CD8-positive, alpha-beta T cell (primary cell): ENCODE measurements at regions of chr5 and their contacts with region 1.

Region 1: DNA sequence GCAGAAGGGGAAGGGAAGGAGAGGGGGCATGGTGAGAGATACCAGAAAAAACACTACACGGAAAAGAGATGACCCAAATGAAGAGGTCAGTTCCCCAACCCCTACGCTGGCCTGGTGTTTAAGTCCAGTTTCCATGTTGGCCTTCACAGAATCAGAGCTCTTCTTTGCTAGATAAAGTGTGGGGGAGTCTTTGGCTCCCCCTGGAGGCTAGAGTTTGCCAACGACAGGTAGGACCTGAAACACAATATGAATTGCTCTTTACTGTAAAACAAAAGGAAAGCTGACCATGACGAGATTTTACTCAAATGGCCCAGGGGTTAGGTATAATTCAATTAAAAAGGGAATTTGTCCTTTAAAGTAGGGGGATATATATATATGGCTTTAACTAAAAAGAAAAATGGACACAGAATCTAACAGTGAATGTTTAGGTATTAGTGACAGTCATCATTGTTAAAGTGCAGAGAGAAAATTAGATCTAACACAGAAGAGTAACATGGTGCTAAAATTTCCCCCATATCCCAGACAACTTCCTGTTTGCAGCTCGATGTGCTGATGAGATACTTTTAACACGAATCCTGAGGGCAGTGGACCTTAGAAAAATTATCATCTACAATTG is 92.0 kb downstream of the SV2C start:
- DNase-seq: peak; percentile 23 to 73 (median 51)
- ATAC-seq: peak; percentile 49
- H3K4me3 ChIP-seq: no peak overlapping the region
- H3K4me3 Mint-ChIP-seq: peak overlapping the region; percentile 22
- H3K27ac ChIP-seq: peak overlapping the region in 1 of 2 experiments; percentile 69
- H3K27ac Mint-ChIP-seq: no peak overlapping the region
- H3K4me1 ChIP-seq: peaks cover 11% of the 10 kb centered on the region
- H3K4me1 Mint-ChIP-seq: peaks cover 14% of the 10 kb centered on the region
- H3K27me3 ChIP-seq: no peaks in the 10 kb centered on the region
- H3K27me3 Mint-ChIP-seq: no peaks in the 10 kb centered on the region
- CTCF ChIP-seq: peak; percentile 87

Region 2: GRCh38 chr5:76145945-76146344 is 29.2 kb before region 1 on chr5:
- CTCF ChIA-PET with region 1: interaction called, 10 read pairs
- POLR2A ChIA-PET with region 1: no interaction called
- intact Hi-C with region 1: no loop called
- DNase-seq: peak in 2 of 9 experiments; percentile 31 to 34
- ATAC-seq: no peak
- H3K4me3 ChIP-seq: no peak overlapping the region
- H3K4me3 Mint-ChIP-seq: no peak overlapping the region
- H3K27ac ChIP-seq: no peak overlapping the region
- H3K27ac Mint-ChIP-seq: no peak overlapping the region
- H3K4me1 ChIP-seq: no peaks in the 10 kb centered on the region
- H3K4me1 Mint-ChIP-seq: no peaks in the 10 kb centered on the region
- H3K27me3 ChIP-seq: no peaks in the 10 kb centered on the region
- H3K27me3 Mint-ChIP-seq: peaks cover 5% of the 10 kb centered on the region
- CTCF ChIP-seq: no peak

Region 3: DNA sequence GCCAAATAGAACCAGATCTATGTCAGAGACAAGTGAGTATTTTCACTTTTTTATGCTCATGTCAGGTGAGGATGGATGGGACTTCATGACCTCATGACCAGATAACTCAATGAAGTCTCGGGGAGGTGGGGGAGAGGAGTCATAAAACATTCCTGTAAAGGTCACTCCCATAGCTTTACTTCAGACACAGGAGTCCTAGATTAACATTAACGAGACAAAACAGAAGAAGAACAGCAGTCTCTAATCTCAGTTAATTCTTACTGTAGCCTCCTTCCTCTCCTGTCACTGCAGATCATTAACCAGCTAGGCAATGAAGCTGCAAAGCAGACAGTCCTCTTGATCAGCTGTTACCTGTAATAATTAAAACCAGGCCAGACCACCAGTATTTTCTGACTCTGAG is 788.9 kb after region 1 on chr5:
- CTCF ChIA-PET with region 1: no interaction called
- POLR2A ChIA-PET with region 1: no interaction called
- intact Hi-C with region 1: no loop called
- DNase-seq: no peak
- ATAC-seq: no peak
- H3K4me3 ChIP-seq: no peak overlapping the region
- H3K4me3 Mint-ChIP-seq: no peak overlapping the region
- H3K27ac ChIP-seq: no peak overlapping the region
- H3K27ac Mint-ChIP-seq: no peak overlapping the region
- H3K4me1 ChIP-seq: no peaks in the 10 kb centered on the region
- H3K4me1 Mint-ChIP-seq: no peaks in the 10 kb centered on the region
- H3K27me3 ChIP-seq: no peaks in the 10 kb centered on the region
- H3K27me3 Mint-ChIP-seq: peaks cover 5% of the 10 kb centered on the region
- CTCF ChIP-seq: no peak